Right cardiac atrium (tissue), 5 donors: ENCODE measurements at regions of chr1 and their contacts with region 1.

Region 1: GRCh38 chr1:116485071-116485735 is 85.6 kb downstream of the CD58 start:
- DNase-seq: peak; percentile 94 to 98 (median 96)
- ATAC-seq: peak; percentile 86 to 88
- H3K4me3 ChIP-seq: no peak overlapping the region
- H3K27ac ChIP-seq: peak overlapping the region; percentile 3
- H3K4me1 ChIP-seq: peaks cover 17% of the 10 kb centered on the region
- H3K27me3 ChIP-seq: no peaks in the 10 kb centered on the region

Region 2: GRCh38 chr1:116139592-116140134 is 345.5 kb before region 1 on chr1:
- intact Hi-C with region 1: loop called in 2 of 4 experiments (anchors 5 kb)
- DNase-seq: no peak
- ATAC-seq: no peak
- H3K4me3 ChIP-seq: no peak overlapping the region
- H3K27ac ChIP-seq: no peak overlapping the region
- H3K4me1 ChIP-seq: no peaks in the 10 kb centered on the region
- H3K27me3 ChIP-seq: no peaks in the 10 kb centered on the region

Region 3: GRCh38 chr1:116151739-116152576 is 333.2 kb before region 1 on chr1:
- intact Hi-C with region 1: loop called in 2 of 4 experiments (anchors 5 kb)
- DNase-seq: peak; percentile 81 to 91 (median 91)
- ATAC-seq: peak; percentile 96 to 98
- H3K4me3 ChIP-seq: peak overlapping the region; percentile 35
- H3K27ac ChIP-seq: no peak overlapping the region
- H3K4me1 ChIP-seq: peaks cover 5% of the 10 kb centered on the region
- H3K27me3 ChIP-seq: no peaks in the 10 kb centered on the region

Region 4: DNA sequence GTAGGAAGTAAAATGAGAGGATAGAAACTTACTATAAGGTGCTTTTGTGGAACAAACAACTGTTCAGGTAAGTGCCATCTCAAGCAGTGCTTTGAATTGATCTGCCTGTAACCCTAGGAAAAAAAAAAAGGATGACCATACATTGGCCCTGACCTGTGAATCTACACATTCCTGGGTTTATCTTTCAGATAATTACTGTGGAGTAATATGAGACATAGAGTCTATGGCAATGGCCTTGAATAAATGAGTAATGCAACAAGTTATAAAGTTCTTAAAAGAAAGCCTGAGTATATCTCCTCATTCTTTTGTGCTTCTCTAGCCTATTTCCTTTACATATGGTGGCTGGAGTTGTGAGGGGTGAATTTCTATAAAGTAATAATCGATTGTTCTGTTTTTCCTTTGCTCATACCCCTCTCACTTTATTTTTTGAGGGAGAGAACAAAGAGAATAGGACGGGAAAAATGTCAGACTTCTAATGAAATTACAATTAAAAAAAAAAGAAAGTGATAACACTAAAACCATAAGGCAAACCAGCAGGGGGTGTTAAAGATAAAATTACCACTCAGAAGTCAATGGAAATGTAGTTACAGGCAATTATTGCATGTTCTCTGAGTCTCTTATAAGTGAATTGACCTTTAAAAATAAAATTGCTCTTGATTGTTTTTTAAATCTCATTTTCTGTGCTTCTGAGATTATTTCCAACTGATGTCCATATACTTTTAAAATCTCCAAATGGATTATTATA is 124.6 kb before region 1 on chr1:
- intact Hi-C with region 1: loop called in 3 of 4 experiments (anchors 2 to 10 kb)
- DNase-seq: no peak
- ATAC-seq: no peak
- H3K4me3 ChIP-seq: no peak overlapping the region
- H3K27ac ChIP-seq: no peak overlapping the region
- H3K4me1 ChIP-seq: no peaks in the 10 kb centered on the region
- H3K27me3 ChIP-seq: no peaks in the 10 kb centered on the region

Region 5: GRCh38 chr1:116390195-116390594 is 95.0 kb before region 1 on chr1:
- intact Hi-C with region 1: loop called in 1 of 4 experiments (anchors 10 kb)
- DNase-seq: no peak
- ATAC-seq: no peak
- H3K4me3 ChIP-seq: no peak overlapping the region
- H3K27ac ChIP-seq: no peak overlapping the region
- H3K4me1 ChIP-seq: no peaks in the 10 kb centered on the region
- H3K27me3 ChIP-seq: no peaks in the 10 kb centered on the region